GM12878 (cell line): ENCODE measurements at regions of chr6 and their contacts with region 1.

Region 1: DNA sequence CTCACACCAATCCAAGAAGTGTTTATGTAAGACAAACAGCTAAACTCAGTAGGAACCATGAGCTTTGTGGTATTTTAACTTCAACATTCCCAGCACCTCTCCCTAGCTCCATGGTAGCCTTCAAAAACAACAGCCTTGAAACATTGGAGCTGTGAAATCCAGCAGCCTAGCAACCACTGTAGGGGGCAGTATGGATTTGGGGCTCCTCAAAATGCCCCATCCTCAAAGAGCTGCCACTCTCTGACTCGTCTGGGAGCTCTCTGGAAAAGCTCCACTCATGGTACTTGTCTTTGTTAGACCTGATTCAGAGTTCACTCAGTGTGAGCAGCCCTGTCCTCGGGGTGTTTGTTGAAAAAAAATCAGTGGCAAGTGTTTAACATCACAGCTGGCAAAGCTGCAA is 82.9 kb downstream of the KIF6 start:
- DNase-seq: no peak
- ATAC-seq: peak; percentile 37
- H3K4me3 ChIP-seq: no peak overlapping the region
- H3K27ac ChIP-seq: no peak overlapping the region
- H3K4me1 ChIP-seq: no peaks in the 10 kb centered on the region
- H3K27me3 ChIP-seq: no peaks in the 10 kb centered on the region; a peak in 1 of 4 replicates
- CTCF ChIP-seq: 0 out of 6 replicates have a peak, but pooled peaks of 1 of the 3 experiments have one; percentile 8
- EP300 ChIP-seq: no peak
- POLR2A ChIP-seq: no peak
- RAD21 ChIP-seq: no peak

Region 2: DNA sequence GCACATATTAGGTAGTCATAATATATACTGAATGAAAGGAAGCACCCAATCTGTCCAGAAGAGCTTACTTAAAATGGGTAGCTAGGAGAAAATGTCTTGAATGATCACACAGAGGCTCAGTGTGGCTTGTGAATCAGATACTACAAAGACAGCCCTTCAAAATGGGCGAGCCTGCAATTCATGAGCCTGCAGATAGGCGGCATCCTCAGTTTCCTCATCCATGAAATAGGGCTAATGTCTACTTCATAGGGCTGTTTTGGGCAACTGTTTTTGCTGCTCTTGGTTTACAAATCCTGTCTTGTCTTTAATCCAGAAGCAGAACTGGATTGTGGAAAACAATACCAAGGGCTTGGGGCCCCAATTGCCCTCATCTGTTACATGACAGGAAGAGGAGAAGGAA is 190.4 kb before region 1 on chr6:
- CTCF ChIA-PET with region 1: interaction called, 10 read pairs
- POLR2A ChIA-PET with region 1: no interaction called
- RAD21 ChIA-PET with region 1: no interaction called
- SMC1A ChIA-PET with region 1: interaction called, 7 read pairs
- in situ Hi-C with region 1: no loop called
- intact Hi-C with region 1: no loop called
- DNase-seq: no peak
- ATAC-seq: peak; percentile 76
- H3K4me3 ChIP-seq: no peak overlapping the region
- H3K27ac ChIP-seq: no peak overlapping the region
- H3K4me1 ChIP-seq: no peaks in the 10 kb centered on the region
- H3K27me3 ChIP-seq: no peaks in the 10 kb centered on the region
- CTCF ChIP-seq: peak; percentile 40 to 66 (median 60)
- EP300 ChIP-seq: no peak
- POLR2A ChIP-seq: no peak
- RAD21 ChIP-seq: peak; percentile 24; the same call in 1 of the 2 replicates

Region 3: DNA sequence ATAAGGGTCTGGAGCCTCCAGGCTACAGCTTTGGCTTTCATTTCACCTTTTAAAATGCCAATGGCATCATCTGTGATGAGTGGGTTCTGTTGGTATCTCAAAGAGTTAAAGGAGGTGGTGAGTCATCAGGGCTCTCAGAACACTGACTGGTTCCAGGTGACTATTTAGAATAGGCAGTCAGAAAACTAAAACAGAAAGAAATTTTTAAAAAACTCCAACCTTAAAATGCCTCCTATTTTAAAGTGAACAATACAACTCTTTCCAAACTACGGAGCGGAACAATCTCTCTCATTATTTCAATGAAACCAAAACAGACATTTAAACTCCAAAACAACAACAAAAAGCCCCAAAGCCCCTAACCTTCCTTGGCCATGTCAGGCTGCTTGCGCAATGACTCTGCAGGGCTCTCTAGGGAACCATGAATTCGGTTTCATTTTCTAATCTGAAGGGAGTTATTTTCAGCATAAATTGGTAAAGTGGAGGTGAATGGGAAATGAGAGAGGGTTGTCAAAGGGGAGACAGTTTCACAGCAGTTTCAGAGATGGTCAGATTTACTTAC is 112.0 kb before region 1 on chr6:
- CTCF ChIA-PET with region 1: no interaction called
- POLR2A ChIA-PET with region 1: no interaction called
- RAD21 ChIA-PET with region 1: no interaction called
- SMC1A ChIA-PET with region 1: interaction called, 4 read pairs
- in situ Hi-C with region 1: no loop called
- intact Hi-C with region 1: loop called (anchors 5 kb)
- DNase-seq: peak; percentile 94
- ATAC-seq: peak; percentile 97
- H3K4me3 ChIP-seq: 0 out of 2 replicates have a peak overlapping the region, but pooled peaks have one; percentile 9
- H3K27ac ChIP-seq: peak overlapping the region; percentile 44; the same call in 1 of the 2 replicates
- H3K4me1 ChIP-seq: peaks cover 9% of the 10 kb centered on the region
- H3K27me3 ChIP-seq: no peaks in the 10 kb centered on the region
- CTCF ChIP-seq: no peak
- EP300 ChIP-seq: peak; percentile 84 to 94
- POLR2A ChIP-seq: no peak
- RAD21 ChIP-seq: no peak

Region 4: DNA sequence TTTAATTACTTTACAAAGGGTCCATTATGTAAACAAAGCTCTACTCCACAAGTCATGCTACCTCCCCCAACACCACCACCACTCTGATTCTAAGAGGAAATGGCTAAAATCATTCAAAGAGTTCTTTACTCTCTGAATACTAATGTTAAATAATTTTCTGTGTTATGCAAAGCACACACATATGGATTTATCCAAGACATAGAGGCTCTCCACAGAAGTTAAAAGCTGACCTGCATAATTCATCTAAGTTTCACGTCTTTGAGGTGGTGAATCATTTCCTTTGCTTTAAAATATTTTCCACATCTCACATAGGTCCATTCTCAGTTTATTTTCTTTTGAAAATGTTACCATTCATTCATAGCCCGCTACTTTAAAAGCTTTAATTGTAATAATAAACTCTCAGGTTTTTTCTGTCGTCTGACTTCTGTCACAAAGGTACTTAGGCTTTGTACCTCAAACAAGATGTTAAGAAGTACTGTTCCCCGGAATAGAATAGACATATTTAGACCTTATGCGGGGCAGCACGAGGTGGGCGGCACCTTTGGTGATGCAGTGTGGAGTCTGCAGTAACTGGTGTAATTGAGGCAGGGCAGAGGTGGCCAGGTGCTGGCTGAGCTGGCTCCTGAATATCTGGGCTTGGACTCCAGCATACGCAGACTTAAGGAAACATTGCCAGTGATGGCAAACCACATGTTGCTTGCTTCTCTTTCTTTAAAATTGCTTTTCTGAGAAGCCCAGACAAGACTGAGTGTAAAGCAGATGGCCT is 27.1 kb after region 1 on chr6:
- CTCF ChIA-PET with region 1: interaction called, 3 read pairs
- POLR2A ChIA-PET with region 1: no interaction called
- RAD21 ChIA-PET with region 1: interaction called, 3 read pairs
- SMC1A ChIA-PET with region 1: interaction called, 12 read pairs
- in situ Hi-C with region 1: no loop called
- intact Hi-C with region 1: no loop called
- DNase-seq: no peak
- ATAC-seq: peak; percentile 36
- H3K4me3 ChIP-seq: no peak overlapping the region
- H3K27ac ChIP-seq: no peak overlapping the region
- H3K4me1 ChIP-seq: no peaks in the 10 kb centered on the region
- H3K27me3 ChIP-seq: no peaks in the 10 kb centered on the region
- CTCF ChIP-seq: no peak
- EP300 ChIP-seq: no peak
- POLR2A ChIP-seq: no peak
- RAD21 ChIP-seq: no peak